IMR-90 (cell line): ENCODE measurements at regions of chr1 and their contacts with region 1.

Region 1: GRCh38 chr1:98201666-98202081 is 280.8 kb upstream of the DPYD start:
- DNase-seq: peak; percentile 96
- ATAC-seq: peak; percentile 92
- H3K4me3 ChIP-seq: peak overlapping the region; percentile 1; the same call in 1 of the 2 replicates
- H3K27ac ChIP-seq: peak overlapping the region; percentile 71
- H3K4me1 ChIP-seq: peaks cover 11% of the 10 kb centered on the region
- H3K27me3 ChIP-seq: no peaks in the 10 kb centered on the region
- CTCF ChIP-seq: no peak
- POLR2A ChIP-seq: no peak
- RAD21 ChIP-seq: no peak

Region 2: GRCh38 chr1:98177751-98178150 is 23.9 kb before region 1 on chr1:
- CTCF ChIA-PET with region 1: no interaction called
- POLR2A ChIA-PET with region 1: no interaction called
- dilution Hi-C with region 1: no loop called
- in situ Hi-C with region 1: no loop called
- intact Hi-C with region 1: loop called (anchors 1 kb)
- DNase-seq: peak; percentile 12
- ATAC-seq: no peak; the same call in 1 of the 2 replicates
- H3K4me3 ChIP-seq: no peak overlapping the region
- H3K27ac ChIP-seq: no peak overlapping the region
- H3K4me1 ChIP-seq: no peaks in the 10 kb centered on the region
- H3K27me3 ChIP-seq: no peaks in the 10 kb centered on the region
- CTCF ChIP-seq: no peak
- POLR2A ChIP-seq: no peak
- RAD21 ChIP-seq: no peak

Region 3: DNA sequence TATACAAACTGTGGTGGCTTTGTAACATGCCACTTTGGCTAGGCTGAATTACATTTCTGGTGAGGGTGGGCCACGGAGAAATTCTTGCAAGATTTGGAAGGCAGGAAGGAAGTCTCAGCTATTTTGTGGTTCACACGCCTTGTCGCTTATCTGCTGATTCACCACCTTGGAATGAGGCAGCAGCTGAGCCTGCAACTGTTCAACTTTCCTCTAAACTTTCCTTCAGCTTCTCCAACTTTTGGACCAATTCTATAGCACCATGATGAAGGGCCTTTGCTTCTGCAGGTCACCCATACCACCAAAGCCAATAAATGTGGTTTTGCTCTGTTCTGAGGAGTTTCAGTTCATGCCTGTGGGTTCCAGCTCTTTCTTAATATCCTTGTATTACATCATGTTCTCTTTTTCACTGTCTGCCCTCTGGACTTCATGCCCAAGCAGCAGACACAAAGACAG is 122.3 kb after region 1 on chr1:
- CTCF ChIA-PET with region 1: no interaction called
- POLR2A ChIA-PET with region 1: no interaction called
- dilution Hi-C with region 1: no loop called
- in situ Hi-C with region 1: no loop called
- intact Hi-C with region 1: loop called (anchors 5 kb)
- DNase-seq: peak; percentile 96
- ATAC-seq: peak; percentile 73
- H3K4me3 ChIP-seq: no peak overlapping the region
- H3K27ac ChIP-seq: peak overlapping the region; percentile 37
- H3K4me1 ChIP-seq: peaks cover 20% of the 10 kb centered on the region
- H3K27me3 ChIP-seq: no peaks in the 10 kb centered on the region
- CTCF ChIP-seq: no peak
- POLR2A ChIP-seq: no peak
- RAD21 ChIP-seq: no peak